Activated naive CD4-positive, alpha-beta T cell treated with anti-CD3 and anti-CD28 coated beads for 36 hours (primary cell): ENCODE measurements at regions of chr2 and their contacts with region 1.

Region 1: GRCh38 chr2:42196403-42197267 is 27.5 kb downstream of the EML4 start:
- DNase-seq: peak; percentile 68
- H3K4me3 Mint-ChIP-seq: no peak overlapping the region
- H3K27ac Mint-ChIP-seq: peak overlapping the region; percentile 44
- H3K4me1 Mint-ChIP-seq: peaks cover 74% of the 10 kb centered on the region
- H3K27me3 Mint-ChIP-seq: no peaks in the 10 kb centered on the region

Region 2: DNA sequence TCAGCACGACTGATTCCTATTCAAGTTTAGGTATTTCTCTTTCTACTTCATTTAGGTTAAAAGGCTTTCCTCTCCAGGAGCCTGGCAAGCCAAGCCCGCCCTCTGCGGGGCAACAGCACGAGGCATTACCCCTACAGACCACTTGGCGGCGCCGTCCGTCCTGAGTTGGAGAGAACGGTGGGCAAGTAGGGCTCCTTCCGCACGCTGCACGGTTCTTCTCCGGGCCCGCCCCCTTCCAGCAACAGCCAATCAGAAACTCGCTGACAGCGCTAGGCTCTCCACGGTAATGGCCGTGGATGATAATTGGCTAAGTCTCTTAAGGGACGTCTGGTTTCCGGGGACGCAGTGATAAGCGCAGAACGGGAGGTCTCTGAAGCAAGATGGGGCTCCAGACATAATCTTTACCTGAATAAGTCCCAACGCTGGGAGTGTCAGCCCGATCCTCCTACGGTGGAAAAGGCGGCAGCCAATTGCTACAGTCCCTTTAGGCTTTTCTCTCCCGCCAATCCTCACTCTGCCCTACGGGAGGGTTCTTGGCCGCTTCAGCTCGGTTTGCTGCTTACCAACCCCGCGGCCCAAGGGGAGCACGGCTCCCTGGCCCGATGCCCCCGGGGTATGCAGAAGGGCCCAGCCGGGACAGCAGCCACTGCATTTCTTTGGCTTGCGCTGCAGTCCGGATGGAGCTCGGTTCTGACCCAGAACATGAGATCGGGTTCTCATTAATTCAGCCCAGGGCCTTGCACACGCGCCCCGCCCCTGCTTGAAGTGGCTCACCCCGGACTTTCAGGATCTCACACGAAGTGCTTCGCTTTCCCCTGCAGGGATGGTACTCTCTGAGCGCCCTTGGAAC is 355.7 kb before region 1 on chr2:
- CTCF ChIA-PET with region 1: no interaction called
- intact Hi-C with region 1: loop called (anchors 2 kb)
- DNase-seq: peak; percentile 99
- H3K4me3 Mint-ChIP-seq: peak overlapping the region; percentile 92
- H3K27ac Mint-ChIP-seq: peak overlapping the region; percentile 86
- H3K4me1 Mint-ChIP-seq: peaks cover 5% of the 10 kb centered on the region
- H3K27me3 Mint-ChIP-seq: peaks cover 12% of the 10 kb centered on the region

Region 3: DNA sequence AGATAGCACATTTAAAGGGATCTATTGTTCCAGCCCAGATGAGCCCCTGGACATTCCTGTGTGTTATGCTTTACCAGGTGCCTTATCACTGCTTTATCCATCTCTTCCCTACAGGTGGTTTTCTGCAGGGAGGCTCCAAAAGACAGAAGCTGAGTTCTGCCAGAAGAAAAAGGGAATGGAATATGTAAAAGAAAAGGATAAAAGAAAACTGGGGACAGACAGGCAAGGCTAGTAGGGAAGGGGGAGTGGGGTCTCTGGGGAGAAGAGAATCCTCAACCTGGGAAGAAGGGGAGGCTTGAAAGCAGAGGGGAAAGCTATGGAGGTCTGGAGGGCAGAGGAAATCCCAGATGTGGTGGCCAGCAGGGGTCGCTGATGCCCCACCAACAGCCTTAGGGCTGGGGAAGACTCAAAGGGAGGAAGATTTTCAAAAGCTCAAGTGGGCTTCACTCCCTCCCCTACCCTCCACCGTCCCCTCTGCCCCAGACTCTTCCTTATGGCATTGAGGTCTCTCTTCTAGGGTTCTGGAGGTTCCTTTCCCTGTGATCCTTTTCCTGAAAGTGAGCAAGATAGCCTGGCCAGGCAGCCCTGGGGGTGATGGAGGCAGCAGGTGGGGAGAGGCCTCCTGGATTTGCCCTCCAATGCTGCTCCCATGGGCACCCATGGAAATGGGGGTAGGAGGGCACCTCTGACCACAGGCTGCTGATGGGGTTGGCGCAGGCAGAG is 326.9 kb before region 1 on chr2:
- CTCF ChIA-PET with region 1: no interaction called
- intact Hi-C with region 1: loop called (anchors 2 kb)
- DNase-seq: peak; percentile 81
- H3K4me3 Mint-ChIP-seq: no peak overlapping the region
- H3K27ac Mint-ChIP-seq: no peak overlapping the region
- H3K4me1 Mint-ChIP-seq: no peaks in the 10 kb centered on the region
- H3K27me3 Mint-ChIP-seq: no peaks in the 10 kb centered on the region

Region 4: GRCh38 chr2:42028571-42029148 is 168.0 kb before region 1 on chr2:
- CTCF ChIA-PET with region 1: no interaction called
- intact Hi-C with region 1: no loop called
- DNase-seq: no peak
- H3K4me3 Mint-ChIP-seq: no peak overlapping the region
- H3K27ac Mint-ChIP-seq: no peak overlapping the region
- H3K4me1 Mint-ChIP-seq: no peaks in the 10 kb centered on the region
- H3K27me3 Mint-ChIP-seq: peaks cover 8% of the 10 kb centered on the region

Region 5: GRCh38 chr2:42102024-42102590 is 94.5 kb before region 1 on chr2:
- CTCF ChIA-PET with region 1: interaction called, 75 read pairs
- intact Hi-C with region 1: no loop called
- DNase-seq: peak; percentile 86
- H3K4me3 Mint-ChIP-seq: peak overlapping the region; percentile 70
- H3K27ac Mint-ChIP-seq: peak overlapping the region; percentile 88
- H3K4me1 Mint-ChIP-seq: peaks cover 55% of the 10 kb centered on the region
- H3K27me3 Mint-ChIP-seq: no peaks in the 10 kb centered on the region

Region 6: DNA sequence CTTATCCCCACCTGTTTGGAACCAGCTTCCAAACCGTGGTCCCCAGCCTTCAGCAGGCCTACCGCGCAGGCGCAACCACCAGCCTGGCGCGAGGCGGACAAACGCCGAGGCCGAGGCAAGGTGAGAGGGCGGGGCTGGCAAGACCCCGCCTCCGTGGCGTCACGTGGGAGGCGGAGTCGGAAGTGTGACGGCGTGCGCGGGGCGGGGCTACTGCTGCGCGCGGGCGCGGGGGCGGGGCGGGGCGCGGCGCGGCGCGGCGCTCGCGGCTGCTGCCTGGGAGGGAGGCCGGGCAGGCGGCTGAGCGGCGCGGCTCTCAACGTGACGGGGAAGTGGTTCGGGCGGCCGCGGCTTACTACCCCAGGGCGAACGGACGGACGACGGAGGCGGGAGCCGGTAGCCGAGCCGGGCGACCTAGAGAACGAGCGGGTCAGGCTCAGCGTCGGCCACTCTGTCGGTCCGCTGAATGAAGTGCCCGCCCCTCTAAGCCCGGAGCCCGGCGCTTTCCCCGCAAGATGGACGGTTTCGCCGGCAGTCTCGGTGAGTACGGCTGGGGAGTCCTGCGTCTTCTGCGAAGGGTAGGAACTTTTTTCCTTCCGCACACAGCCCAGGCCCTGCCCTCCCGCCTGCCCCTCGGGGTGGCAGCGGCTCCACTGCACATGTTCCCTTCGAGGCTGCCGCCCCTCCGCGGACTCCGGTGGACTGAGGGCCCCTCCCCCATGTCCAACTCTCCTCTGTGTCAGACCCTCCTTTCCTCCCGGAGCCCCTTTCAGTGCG is 27.3 kb before region 1 on chr2 and contains the start of gene EML4:
- CTCF ChIA-PET with region 1: interaction called, 30 read pairs
- intact Hi-C with region 1: loop called (anchors 1 kb)
- DNase-seq: peak; percentile 89
- H3K4me3 Mint-ChIP-seq: no peak within 1 kb of the TSS
- H3K27ac Mint-ChIP-seq: peak within 1 kb of the TSS; percentile 70
- H3K4me1 Mint-ChIP-seq: peaks cover 24% of the 10 kb centered on the region
- H3K27me3 Mint-ChIP-seq: no peaks in the 10 kb centered on the region
- total RNA-seq, gene EML4: 65.8 to 65.9 TPM

Region 7: GRCh38 chr2:42238644-42239288 is 42.1 kb after region 1 on chr2:
- CTCF ChIA-PET with region 1: interaction called, 6 read pairs
- intact Hi-C with region 1: loop called (anchors 2 kb)
- DNase-seq: peak; percentile 64
- H3K4me3 Mint-ChIP-seq: no peak overlapping the region
- H3K27ac Mint-ChIP-seq: no peak overlapping the region
- H3K4me1 Mint-ChIP-seq: peaks cover 73% of the 10 kb centered on the region
- H3K27me3 Mint-ChIP-seq: no peaks in the 10 kb centered on the region